ENCODE measurements at regions of chr20 and their contacts with region 1.

Region 1: DNA sequence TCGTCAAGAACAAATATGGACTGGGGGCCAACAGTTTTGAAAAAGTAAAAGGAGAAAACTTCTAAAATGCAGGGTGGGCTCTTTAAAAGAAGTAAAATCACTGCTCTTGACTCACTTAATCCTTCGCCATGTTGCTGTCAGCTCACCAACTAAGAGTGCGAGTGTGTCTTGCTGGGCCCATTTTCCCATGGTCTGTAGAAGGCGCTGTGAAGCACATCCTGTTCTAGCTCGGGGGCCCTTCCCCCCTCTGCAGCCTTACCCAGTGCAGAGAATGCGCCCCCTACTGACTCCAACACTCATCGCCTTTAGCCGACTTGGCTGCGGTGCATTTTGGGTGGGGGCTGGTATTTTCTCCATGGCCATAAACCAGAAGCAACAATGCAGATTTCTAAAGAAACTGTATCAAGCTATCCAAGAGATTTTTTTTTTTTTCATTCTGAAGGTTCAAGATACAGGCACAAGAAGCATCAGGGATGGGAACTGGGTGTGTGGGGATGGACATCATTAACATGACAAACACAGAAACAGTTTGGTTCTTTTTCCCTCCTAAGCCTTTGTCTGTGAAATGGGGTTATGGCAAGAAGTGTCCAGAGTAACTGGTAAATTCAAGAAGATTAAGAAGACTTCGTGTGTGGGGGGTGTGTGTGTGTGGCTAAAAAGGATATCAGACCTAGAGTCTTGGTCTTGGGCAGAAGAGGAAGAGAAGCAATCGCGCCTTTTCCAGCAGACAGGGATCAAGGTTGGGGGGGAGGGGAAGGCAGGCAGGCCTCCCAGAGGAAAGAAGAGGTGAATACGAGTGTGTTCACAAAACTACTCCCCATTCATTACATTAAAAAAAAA is 1.7 kb downstream of the ADNP start:
- DNase-seq: peak; percentile 84
- CTCF ChIP-seq: peak; percentile 95

Region 2: DNA sequence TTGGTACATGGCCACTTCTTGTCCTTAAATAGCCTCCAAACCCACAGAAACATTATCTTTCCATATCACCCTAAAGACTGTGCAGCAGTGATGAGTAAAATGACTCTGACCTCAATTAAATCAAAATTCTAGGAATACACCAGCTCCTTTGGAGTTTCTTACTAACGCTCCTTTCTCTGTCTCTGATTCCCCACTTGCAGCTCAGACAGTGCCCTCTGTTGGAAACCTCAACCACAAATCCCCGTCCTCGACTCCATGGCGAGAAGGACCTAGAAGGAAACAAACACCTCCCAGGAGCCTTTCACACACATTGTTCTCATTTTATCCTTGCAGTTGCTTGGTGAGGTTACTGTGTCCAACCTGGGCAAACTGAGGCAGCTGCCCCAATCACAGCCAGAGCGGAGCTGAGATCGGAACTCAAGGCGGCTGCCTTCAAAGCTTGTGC is 215.8 kb before region 1 on chr20:
- CTCF ChIA-PET with region 1: no interaction called
- POLR2A ChIA-PET with region 1: no interaction called
- DNase-seq: no peak
- CTCF ChIP-seq: no peak

Region 3: DNA sequence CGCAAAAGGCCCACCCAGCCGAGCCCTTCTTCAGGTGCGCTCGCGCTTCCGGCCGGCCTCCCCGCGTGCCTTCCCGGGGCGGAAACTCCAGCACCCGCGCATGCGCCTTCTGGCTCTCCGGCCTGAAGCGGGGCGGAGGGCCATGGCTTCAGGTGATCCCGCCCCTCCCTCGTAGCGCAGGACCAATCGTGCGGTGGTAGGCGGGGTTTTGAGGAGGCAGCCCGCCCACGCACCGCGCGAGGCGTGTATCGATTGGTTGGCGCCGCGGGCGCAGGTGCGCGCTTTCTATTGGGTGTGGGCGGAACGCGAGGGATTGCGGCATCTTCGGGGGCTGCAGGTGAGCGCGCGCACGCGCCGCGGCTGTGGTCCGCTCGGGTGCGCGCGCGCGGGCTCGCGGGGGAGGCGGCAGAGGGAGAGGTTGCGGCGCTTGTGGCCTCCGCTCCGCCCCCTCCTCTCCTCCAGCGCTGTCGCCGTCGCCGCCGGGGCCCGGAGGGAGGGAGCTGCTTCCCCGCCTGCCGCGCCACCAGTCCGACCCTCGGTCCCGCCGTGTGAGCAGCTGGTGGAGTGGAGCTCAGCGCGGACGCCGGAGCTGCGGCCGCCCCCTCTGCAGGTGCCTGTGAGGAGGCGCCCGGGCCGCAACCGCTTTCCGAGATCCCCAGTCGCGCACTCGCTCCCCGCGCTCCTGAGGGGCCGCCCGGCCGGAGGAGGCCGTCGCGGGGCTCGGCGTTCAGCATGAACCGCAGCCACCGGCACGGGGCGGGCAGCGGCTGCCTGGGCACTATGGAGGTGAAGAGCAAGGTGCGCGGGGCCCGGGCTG is 198.3 kb before region 1 on chr20 and contains the start of gene PARD6B:
- CTCF ChIA-PET with region 1: no interaction called
- POLR2A ChIA-PET with region 1: no interaction called
- DNase-seq: peak; percentile 100
- CTCF ChIP-seq: no peak

Region 4: GRCh38 chr20:50799890-50800655 is 129.4 kb before region 1 on chr20:
- CTCF ChIA-PET with region 1: interaction called, 220 read pairs
- POLR2A ChIA-PET with region 1: interaction called, 9 read pairs
- DNase-seq: peak; percentile 71
- CTCF ChIP-seq: no peak

Region 5: GRCh38 chr20:50824193-50824632 is 105.3 kb before region 1 on chr20:
- CTCF ChIA-PET with region 1: interaction called, 13 read pairs
- POLR2A ChIA-PET with region 1: no interaction called
- DNase-seq: no peak
- CTCF ChIP-seq: no peak

Region 6: GRCh38 chr20:50885781-50886486 is 43.6 kb before region 1 on chr20:
- CTCF ChIA-PET with region 1: interaction called, 14 read pairs
- POLR2A ChIA-PET with region 1: no interaction called
- DNase-seq: no peak
- CTCF ChIP-seq: no peak

Region 7: DNA sequence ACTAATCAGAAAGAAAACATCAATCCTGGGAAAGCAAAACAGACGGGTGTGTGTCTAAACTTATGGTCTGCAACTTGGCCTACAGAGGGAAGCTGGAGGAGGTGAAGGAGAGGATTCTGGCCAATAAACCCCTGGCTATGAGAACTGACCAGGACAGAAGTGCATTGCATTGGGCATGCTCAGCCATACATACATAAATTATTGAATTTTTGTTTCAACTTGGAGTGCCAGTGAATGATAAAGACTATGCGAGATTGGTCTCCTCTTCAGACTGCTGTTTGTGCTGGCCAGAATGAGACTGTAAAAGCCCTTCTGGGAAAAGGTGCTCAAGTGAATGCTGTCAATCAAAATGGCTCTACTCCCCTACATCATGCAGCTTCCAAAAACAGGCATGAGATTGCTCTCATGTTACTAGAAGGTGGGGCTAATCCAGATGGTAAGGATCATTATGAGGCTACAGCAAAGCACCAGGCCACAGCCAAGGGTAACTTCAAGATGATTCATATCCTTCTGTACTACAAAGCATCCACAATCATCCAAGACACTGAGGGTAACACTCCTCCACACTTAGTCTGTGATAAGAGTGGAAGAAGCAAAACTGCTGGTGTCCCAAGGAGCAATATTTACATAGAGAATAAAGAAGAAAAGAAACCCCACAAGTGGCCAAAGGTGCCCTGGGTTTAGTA is 15.7 kb before region 1 on chr20:
- CTCF ChIA-PET with region 1: interaction called, 191 read pairs
- POLR2A ChIA-PET with region 1: interaction called, 5 read pairs
- DNase-seq: no peak
- CTCF ChIP-seq: no peak

Region 8: DNA sequence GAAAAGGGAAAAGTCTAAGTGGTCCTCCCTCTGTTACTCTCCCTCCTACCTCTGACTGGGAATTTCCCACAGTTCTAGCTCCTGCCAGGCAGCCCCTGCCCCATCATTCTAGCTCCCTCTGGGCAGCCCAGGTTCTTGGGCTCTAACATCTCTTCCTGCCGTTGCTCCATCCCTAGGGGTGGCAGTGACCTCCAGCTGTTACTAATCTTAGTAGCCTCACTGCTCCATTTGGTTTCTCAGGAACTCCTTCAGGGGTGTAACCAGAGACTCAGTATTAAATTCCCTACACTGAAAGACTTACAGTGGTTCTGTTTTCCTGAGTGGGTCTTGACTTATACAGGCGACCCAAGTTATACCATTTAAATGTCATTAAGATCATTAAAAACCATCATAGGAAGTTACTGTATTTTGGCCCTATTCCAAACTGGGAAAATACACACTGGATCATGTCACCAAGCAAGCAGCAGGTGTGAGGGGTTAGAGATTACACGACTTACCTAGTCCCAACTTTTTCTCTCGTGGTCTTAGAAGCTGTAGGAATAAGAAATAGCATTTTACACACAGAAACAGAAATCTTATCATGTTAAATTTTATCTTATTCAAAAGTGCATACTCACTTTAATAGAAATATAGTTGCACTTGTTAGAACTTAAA is 18.7 kb after region 1 on chr20:
- CTCF ChIA-PET with region 1: interaction called, 13 read pairs
- POLR2A ChIA-PET with region 1: no interaction called
- DNase-seq: no peak
- CTCF ChIP-seq: no peak

Region 9: DNA sequence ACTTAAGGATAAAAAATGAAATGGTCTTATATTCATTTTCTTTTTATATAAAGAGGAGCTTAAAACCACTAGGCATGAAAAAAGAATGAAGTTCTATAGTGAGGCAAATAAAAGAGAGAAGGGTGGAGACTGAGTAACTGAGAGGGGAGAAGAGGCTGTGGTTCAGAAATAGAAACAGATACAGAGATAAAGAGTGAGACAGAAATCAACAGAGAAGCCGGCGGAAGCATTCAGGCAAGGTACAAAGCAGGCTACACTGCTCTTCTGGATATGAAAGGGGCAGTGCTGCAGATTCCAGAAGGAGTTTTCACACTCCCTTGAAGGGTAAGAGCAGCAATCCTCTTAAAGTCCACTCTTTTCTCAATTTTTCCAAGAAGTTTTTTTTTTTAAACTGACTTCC is 583.1 kb after region 1 on chr20:
- CTCF ChIA-PET with region 1: no interaction called
- POLR2A ChIA-PET with region 1: interaction called, 10 read pairs
- DNase-seq: no peak
- CTCF ChIP-seq: no peak